ENCODE measurements at regions of chr6 and their contacts with region 1.

Region 1: GRCh38 chr6:56595490-56596122 is 47.1 kb downstream of the DST start:
- DNase-seq: peak; percentile 46
- H3K4me3 ChIP-seq: no peak overlapping the region
- CTCF ChIP-seq: peak; percentile 54

Region 2: DNA sequence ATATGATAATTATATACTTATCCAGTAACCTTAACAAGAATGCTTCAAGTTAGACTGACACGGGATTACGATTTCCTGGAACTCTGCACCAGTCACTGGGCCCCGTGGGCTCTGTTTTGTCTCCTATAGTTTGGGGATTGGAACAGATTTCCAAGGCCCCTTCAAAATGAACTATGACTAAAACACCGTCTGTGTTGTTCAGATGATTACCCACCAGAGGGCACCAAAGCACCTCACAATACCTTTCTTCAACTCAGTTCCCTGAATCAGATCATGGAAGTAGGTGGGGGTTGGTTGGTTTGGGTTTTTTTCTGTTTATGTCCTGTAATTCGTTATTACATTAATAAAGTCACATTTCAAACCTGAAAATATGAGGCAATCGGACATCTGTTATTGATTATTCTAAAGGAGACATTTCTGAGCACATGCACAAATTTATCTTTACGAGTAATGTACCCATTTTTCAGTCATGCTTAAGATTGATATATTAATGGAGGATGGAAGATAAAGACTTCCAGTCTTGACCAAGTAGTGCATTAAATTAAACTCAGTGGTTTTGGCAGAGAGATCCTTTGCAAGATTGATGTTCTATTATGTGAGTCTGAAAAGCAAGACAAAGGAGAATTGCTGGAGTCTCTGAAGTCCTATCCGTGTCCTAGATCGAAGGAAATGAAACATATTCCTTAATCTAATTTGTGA is 236.3 kb before region 1 on chr6:
- in situ Hi-C with region 1: loop called (anchors 25 kb)
- DNase-seq: peak; percentile 72
- H3K4me3 ChIP-seq: no peak overlapping the region
- CTCF ChIP-seq: peak; percentile 66